ENCODE measurements at regions of chr22 and their contacts with region 1.

Region 1: DNA sequence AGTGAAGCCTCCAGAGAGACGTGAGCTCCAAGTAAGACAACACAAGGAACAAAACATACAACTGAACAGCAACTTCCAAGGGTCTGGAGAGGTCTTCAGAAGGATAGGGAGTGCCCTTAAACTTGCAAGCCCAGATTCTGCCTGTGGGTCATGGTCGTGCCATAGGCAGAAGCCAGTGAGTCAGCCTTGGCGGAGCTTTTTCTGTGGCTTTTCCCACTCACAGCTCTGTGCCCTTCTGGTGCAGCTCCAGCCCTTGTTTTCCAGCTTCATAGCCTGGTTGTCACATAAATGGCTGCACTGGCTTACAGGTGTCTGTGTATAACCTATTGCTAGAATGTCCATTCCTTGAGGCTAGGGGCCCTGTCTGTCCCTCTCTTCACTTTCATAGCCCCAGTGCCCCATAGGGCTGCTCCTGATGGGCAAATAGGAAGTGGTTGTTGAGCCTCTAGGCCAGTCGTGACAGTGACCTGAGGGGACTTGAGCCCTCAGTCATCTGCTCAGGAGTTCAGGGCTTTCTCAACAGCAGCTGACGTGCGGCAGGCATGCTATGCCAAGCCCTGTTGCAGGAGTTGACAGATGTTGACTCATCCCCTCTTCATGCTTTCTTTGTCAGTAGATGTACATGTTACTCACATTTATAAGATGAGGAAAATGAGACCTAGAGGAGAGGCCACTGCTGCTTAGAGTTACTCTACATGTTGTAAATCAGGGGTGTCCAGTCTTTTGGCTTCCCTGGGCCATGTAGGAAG is 7.4 kb downstream of the MED15 start:
- DNase-seq: peak; percentile 34
- ATAC-seq: peak; percentile 83
- H3K4me3 Mint-ChIP-seq: no peak overlapping the region
- H3K27ac Mint-ChIP-seq: peak overlapping the region; percentile 6
- H3K4me1 Mint-ChIP-seq: peaks cover 74% of the 10 kb centered on the region
- H3K27me3 Mint-ChIP-seq: no peaks in the 10 kb centered on the region

Region 2: DNA sequence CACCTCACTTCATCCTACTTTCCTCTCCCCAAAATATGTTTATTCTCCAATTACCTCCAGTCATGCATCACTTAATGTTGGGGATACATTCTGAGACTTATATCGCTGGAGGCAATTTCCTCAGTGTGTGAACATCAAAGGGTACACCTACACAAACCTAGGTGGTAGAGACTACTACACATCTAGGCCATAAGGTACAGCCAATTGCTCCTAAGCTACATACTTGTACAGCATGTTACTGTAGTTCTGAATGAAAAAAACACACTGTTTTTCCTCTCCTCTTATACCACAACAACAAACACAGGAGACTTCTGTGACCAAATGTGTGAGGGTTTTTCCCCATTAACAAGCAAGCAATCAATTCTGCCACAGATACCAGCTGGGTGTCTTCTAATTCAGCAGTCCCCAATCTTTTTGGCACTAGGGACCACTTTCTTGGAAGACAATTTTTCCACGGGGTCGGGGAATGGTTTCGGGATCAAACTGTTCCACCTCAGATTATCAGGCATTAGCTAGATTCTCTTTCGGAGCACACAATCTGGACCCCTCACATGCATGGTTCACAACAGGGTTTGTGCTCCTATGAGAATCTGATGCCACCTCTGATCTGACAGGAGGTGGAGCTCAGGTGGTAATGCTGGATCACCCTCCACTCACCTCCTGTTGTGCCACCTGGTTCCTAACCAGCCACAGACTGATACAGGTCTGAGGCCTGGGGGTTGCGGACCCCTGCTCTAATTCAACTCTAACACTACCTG is 24.5 kb before region 1 on chr22:
- CTCF ChIA-PET with region 1: interaction called, 3 read pairs
- POLR2A ChIA-PET with region 1: interaction called, 5 read pairs
- intact Hi-C with region 1: loop called in 1 of 2 experiments (anchors 1 kb)
- DNase-seq: no peak
- ATAC-seq: peak; percentile 47
- H3K4me3 Mint-ChIP-seq: no peak overlapping the region
- H3K27ac Mint-ChIP-seq: no peak overlapping the region
- H3K4me1 Mint-ChIP-seq: peaks cover 42% of the 10 kb centered on the region
- H3K27me3 Mint-ChIP-seq: no peaks in the 10 kb centered on the region